Activated B cell treated with CpG ODN at 0.5 μM for 24 hours (primary cell): ENCODE measurements at regions of chr10 and their contacts with region 1.

Region 1: DNA sequence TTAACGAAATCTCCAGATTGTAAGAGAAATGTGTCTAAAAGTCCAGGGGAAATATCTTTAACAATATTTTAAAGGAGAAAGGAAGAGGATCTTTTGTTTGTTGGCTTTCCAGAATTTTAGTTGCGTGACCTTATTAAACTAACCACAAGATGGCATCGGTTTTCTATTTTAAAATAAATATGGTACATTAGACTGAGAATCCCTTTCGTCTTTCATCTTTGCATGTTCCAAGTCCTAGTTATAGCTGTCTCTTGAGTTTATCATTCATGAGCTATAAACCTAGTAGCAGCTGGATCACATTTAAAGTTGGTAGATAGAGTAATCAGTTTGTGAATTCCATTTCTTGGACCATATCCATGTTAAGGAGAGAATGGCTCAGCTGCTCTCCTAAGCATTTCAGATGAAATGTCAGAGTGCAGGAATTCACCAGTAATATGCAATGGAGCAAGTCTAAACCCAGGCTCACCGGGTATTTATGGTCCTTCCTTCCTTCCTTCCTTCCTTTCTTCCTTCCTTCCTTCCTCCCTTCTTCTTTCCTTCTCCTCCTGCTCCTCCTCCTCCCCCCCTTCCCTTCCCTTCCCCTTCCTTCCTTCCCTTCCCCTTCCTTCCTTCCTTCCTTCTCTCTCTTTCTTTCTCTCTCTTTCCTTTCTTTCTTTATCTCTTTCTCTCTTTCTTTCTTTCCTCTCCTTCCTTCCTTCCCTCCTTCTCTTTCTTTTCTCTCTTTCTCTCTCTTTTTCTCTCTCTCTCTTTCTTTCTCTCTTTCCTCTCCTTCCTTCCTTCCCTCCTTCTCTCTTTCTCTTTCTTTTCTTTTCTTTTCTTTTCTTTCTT is 57.8 kb upstream of the RAB18 start:
- DNase-seq: no peak
- ATAC-seq: no peak
- H3K4me3 Mint-ChIP-seq: no peak overlapping the region
- H3K27ac Mint-ChIP-seq: no peak overlapping the region
- H3K4me1 Mint-ChIP-seq: peaks cover 2% of the 10 kb centered on the region
- H3K27me3 Mint-ChIP-seq: peaks cover 3% of the 10 kb centered on the region
- CTCF ChIP-seq: no peak

Region 2: GRCh38 chr10:27464993-27465392 is 18.7 kb after region 1 on chr10:
- CTCF ChIA-PET with region 1: no interaction called
- POLR2A ChIA-PET with region 1: no interaction called
- intact Hi-C with region 1: no loop called
- DNase-seq: no peak
- ATAC-seq: no peak
- H3K4me3 Mint-ChIP-seq: no peak overlapping the region
- H3K27ac Mint-ChIP-seq: no peak overlapping the region
- H3K4me1 Mint-ChIP-seq: peaks cover 22% of the 10 kb centered on the region
- H3K27me3 Mint-ChIP-seq: peaks cover 5% of the 10 kb centered on the region
- CTCF ChIP-seq: no peak

Region 3: GRCh38 chr10:28179006-28179742 is 732.9 kb after region 1 on chr10:
- CTCF ChIA-PET with region 1: interaction called, 5 read pairs
- POLR2A ChIA-PET with region 1: no interaction called
- intact Hi-C with region 1: loop called (anchors 1 kb)
- DNase-seq: no peak
- ATAC-seq: peak; percentile 64
- H3K4me3 Mint-ChIP-seq: no peak overlapping the region
- H3K27ac Mint-ChIP-seq: no peak overlapping the region
- H3K4me1 Mint-ChIP-seq: peaks cover 15% of the 10 kb centered on the region
- H3K27me3 Mint-ChIP-seq: no peaks in the 10 kb centered on the region
- CTCF ChIP-seq: peak; percentile 88